T-cell (primary cell): ENCODE measurements at regions of chr3 and their contacts with region 1.

Region 1: DNA sequence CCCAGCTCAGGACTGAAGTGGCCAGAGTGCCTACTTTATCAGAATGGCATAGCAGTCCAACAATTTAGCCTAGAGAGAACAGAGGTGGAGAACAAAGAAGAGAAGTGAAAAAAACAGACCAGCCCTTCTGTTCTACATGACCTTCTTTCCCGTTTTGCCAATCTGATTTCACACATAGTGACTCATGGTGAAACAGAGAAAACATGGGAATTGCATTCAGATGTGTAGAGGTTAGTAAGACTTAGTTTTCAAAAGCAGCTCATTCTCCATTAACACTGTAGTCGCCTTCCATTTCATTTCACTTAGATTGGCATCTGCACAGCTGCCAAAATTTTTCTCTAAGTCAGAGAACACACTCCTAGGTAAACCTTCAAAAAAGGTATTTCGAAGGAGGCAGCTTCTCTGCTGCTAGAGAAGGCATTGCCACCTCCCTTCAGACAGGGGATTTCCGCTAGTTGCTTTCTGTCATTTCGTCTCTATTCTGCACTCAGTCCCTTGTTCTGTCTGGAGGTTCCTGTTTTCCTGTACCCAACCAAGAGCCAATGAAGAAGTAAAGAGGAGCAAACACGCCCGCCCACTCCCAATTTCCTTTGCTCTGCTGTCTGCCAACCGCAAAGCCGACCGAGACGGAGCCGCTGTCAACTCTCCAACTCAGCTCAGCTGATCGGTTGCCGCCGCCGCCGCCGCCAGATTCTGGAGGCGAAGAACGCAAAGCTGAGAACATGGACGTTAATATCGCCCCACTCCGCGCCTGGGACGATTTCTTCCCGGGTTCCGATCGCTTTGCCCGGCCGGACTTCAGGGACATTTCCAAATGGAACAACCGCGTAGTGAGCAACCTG is at the start of gene ARL6IP5:
- DNase-seq: peak; percentile 73 to 95 (median 90)
- ATAC-seq: peak; percentile 73 to 80 (median 75)
- H3K4me3 ChIP-seq: peak within 1 kb of the TSS; percentile 85 to 100
- H3K4me3 Mint-ChIP-seq: peak within 1 kb of the TSS; percentile 87 to 95 (median 90)
- H3K27ac ChIP-seq: peak within 1 kb of the TSS; percentile 90
- H3K27ac Mint-ChIP-seq: peak within 1 kb of the TSS; percentile 98 to 99
- H3K4me1 ChIP-seq: peaks cover 56 to 67% of the 10 kb centered on the region in 2 experiments
- H3K4me1 Mint-ChIP-seq: peaks cover 69 to 77% (median 73%) of the 10 kb centered on the region in 3 donors
- H3K27me3 ChIP-seq: no peaks in the 10 kb centered on the region
- H3K27me3 Mint-ChIP-seq: no peaks in the 10 kb centered on the region
- total RNA-seq, gene ARL6IP5: 106 to 135 (median 127) TPM

Region 2: GRCh38 chr3:68631810-68632545 is 452.6 kb before region 1 on chr3:
- CTCF ChIA-PET with region 1: no interaction called
- POLR2A ChIA-PET with region 1: no interaction called
- DNase-seq: no peak
- ATAC-seq: no peak
- H3K4me3 ChIP-seq: no peak overlapping the region
- H3K4me3 Mint-ChIP-seq: no peak overlapping the region
- H3K27ac ChIP-seq: no peak overlapping the region
- H3K27ac Mint-ChIP-seq: no peak overlapping the region
- H3K4me1 ChIP-seq: no peaks in the 10 kb centered on the region
- H3K4me1 Mint-ChIP-seq: no peaks in the 10 kb centered on the region
- H3K27me3 ChIP-seq: no peaks in the 10 kb centered on the region
- H3K27me3 Mint-ChIP-seq: peaks cover 11 to 20% of the 10 kb centered on the region in 2 donors

Region 3: GRCh38 chr3:69051756-69052471 is 32.6 kb before region 1 on chr3 and contains the start of gene TMF1:
- CTCF ChIA-PET with region 1: interaction called in 1 of 2 experiments, 5 read pairs
- POLR2A ChIA-PET with region 1: interaction called in 1 of 2 experiments, 11 read pairs
- DNase-seq: peak; percentile 92 to 100 (median 97)
- ATAC-seq: peak; percentile 91 to 93 (median 92)
- H3K4me3 ChIP-seq: peak within 1 kb of the TSS; percentile 73 to 91
- H3K4me3 Mint-ChIP-seq: peak within 1 kb of the TSS; percentile 98 to 99 (median 99)
- H3K27ac ChIP-seq: peak within 1 kb of the TSS; percentile 87
- H3K27ac Mint-ChIP-seq: peak within 1 kb of the TSS; percentile 97
- H3K4me1 ChIP-seq: peaks cover 20 to 22% of the 10 kb centered on the region in 2 experiments
- H3K4me1 Mint-ChIP-seq: peaks cover 47 to 53% (median 50%) of the 10 kb centered on the region in 3 donors
- H3K27me3 ChIP-seq: no peaks in the 10 kb centered on the region
- H3K27me3 Mint-ChIP-seq: no peaks in the 10 kb centered on the region
- total RNA-seq, gene TMF1: 39.9 to 80.4 (median 46.1) TPM

Region 4: DNA sequence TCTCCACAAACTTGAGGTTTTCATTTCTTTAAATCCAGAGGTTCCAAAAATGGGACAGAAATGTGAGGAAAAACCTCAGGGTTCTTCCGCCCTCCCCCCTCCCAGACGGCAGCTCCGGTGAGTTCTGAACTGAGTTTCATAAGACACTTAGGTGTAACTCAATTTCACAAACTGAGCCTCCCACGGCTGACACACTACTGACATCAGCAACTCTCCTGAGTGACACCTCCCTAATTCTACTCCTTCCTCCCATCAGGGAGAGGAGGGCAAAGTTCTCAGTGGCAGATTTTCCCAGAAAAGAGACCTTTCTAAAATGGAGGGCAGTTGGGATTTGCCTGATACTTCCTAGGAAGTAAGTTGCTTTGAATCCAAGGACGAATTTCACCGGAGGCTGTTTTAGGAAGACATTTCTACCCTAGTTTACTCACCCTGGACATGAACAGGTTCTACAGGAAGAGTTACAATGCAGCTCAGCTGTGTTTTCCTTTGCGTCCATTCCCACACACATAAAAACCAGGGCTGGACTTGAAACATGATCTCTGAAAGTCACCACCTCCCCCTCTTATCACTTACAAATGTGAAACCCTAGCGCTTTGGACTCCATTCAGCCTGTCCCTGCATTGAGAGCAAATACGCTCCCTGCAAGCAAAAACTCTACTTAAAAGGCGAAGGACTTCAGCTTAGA is 116.0 kb after region 1 on chr3:
- CTCF ChIA-PET with region 1: interaction called in 1 of 2 experiments, 11 read pairs
- POLR2A ChIA-PET with region 1: interaction called in 1 of 2 experiments, 5 read pairs
- DNase-seq: peak in 6 of 35 experiments; percentile 3 to 40 (median 8)
- ATAC-seq: peak in 1 of 4 experiments; percentile 37
- H3K4me3 ChIP-seq: peak overlapping the region in 1 of 2 donors; percentile 56
- H3K4me3 Mint-ChIP-seq: peak overlapping the region; percentile 73 to 90 (median 84)
- H3K27ac ChIP-seq: peak overlapping the region; percentile 81
- H3K27ac Mint-ChIP-seq: peak overlapping the region; percentile 93 to 95
- H3K4me1 ChIP-seq: peaks cover 10 to 22% of the 10 kb centered on the region in 2 experiments
- H3K4me1 Mint-ChIP-seq: peaks cover 26 to 55% (median 48%) of the 10 kb centered on the region in 3 donors
- H3K27me3 ChIP-seq: no peaks in the 10 kb centered on the region
- H3K27me3 Mint-ChIP-seq: no peaks in the 10 kb centered on the region